Mammary epithelial cell (primary cell): ENCODE measurements at regions of chr1 and their contacts with region 1.

Region 1: DNA sequence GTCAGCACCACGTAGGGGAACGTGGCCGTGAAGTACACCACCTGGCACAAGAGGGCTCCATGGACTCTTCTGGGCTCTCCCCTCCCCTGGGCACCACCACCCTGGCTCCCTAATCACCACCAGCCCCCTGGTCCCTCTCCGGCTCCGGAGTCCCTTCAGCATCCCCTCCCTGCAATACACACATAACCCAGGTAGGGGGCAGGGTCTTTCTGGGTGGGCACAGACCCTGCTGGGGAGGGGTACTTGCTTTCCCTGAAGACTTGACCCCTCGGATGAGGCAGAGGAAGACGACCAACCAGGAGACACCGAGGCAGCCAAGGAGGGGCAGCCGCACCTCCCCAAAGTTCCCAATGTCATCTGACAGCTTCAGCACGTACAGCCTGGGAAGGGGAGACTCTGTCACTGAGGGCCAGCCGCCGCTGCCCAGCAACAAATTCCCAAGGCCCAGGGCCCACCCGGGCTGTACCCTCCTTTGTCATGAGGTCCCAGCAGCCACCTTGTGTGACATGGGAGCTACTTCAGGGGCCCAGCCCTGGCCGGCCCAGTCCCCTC is 11.3 kb downstream of the CCDC24 start:
- DNase-seq: no peak
- H3K4me3 ChIP-seq: no peak overlapping the region
- H3K27ac ChIP-seq: no peak overlapping the region
- H3K4me1 ChIP-seq: no peaks in the 10 kb centered on the region
- H3K27me3 ChIP-seq: no peaks in the 10 kb centered on the region
- CTCF ChIP-seq: peak in 1 of 2 donors; percentile 9

Region 2: GRCh38 chr1:44036409-44037139 is 33.9 kb after region 1 on chr1:
- CTCF ChIA-PET with region 1: interaction called, 4 read pairs
- dilution Hi-C with region 1: no loop called
- in situ Hi-C with region 1: loop called in 1 of 2 experiments (anchors 5 kb)
- intact Hi-C with region 1: loop called (anchors 1 kb)
- DNase-seq: peak; percentile 62
- H3K4me3 ChIP-seq: no peak overlapping the region
- H3K27ac ChIP-seq: no peak overlapping the region
- H3K4me1 ChIP-seq: peaks cover 26% of the 10 kb centered on the region
- H3K27me3 ChIP-seq: no peaks in the 10 kb centered on the region
- CTCF ChIP-seq: peak; percentile 88 to 95